Heart right ventricle (tissue), 16 donors: ENCODE measurements at regions of chr9 and their contacts with region 1.

Region 1: DNA sequence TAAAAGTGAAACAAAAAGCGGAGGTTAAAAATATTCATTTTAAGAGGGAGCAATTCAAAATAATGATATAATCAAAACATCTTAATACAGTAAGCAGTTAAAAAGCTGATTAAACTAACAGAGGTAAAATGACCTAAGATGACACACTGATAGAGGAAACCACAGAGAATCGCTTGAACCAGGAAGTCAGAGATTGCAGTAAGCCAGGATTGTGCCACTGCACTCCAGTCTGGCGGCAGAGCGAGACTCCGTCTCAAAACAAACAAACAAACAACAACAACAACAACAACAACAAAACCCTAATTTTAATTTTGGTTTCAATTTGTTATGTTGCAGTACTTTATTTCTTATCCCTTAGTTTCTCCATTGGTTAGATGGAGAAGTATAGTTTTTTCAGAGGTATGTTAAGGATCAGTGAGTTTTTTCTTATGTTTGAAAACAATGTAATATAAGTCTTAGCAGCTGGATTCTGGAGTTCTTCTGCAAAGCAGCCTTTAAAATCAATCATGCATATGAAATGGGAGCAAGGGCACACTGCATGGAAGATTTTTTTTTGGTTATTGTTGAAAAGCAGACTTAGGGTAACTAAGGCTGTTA is 58.5 kb downstream of the MLANA start:
- DNase-seq: no peak
- ATAC-seq: no peak
- H3K4me3 ChIP-seq: peak overlapping the region in 6 of 10 donors; percentile 3 to 32 (median 22)
- H3K27ac ChIP-seq: peak overlapping the region in 2 of 10 donors; percentile 13 to 45
- H3K4me1 ChIP-seq: peaks cover 0 to 37% (median 22%) of the 10 kb centered on the region in 9 donors
- H3K27me3 ChIP-seq: no peaks in the 10 kb centered on the region
- CTCF ChIP-seq: no peak

Region 2: DNA sequence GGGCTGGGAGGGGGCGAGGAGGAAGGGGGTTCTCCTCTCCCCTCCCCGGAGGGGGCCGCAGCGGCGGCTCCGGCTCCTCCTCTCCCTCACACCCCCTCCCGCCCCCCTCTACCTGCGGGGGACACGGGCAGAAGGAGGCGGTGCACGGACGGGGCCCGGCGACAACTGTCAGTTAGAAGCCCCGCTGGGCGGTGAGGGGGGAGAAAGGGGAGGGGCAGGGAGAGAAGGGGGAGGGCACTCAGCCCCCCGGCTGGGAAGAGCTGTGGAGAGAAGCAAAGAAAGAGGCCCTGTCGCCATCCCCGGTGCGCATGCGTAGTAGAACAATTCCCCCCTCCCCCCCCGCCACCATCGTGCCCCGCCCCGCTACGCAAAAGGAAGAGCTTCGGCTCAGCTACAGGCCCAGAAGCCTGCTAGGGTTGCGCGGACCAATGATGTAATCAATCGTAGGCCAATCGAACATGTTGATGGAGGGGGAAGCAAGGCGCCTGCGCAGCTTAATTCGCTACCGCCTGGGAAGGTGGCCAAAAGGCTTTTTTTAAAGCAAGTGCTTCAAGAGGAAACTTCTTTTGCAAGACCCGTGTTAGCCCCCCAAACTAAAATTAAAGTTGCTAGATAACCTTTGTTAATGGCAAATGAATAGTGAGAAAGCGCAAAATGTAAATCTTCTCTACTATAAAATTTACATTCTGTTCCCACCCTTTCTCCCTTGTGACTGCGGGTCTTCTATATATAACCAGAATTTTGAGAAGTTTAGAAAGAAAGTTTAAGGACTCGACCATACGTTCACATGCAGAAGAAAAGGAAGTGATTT is 59.2 kb after region 1 on chr9:
- intact Hi-C with region 1: loop called in 1 of 10 experiments (anchors 10 kb)
- DNase-seq: peak; percentile 89 to 98
- ATAC-seq: peak; percentile 91 to 97 (median 94)
- H3K4me3 ChIP-seq: peak overlapping the region; percentile 68 to 97 (median 84)
- H3K27ac ChIP-seq: peak overlapping the region; percentile 95 to 99 (median 98)
- H3K4me1 ChIP-seq: peaks cover 4 to 71% (median 62%) of the 10 kb centered on the region in 9 donors
- H3K27me3 ChIP-seq: no peaks in the 10 kb centered on the region
- CTCF ChIP-seq: no peak

Region 3: GRCh38 chr9:6015278-6016157 is 66.3 kb after region 1 on chr9 and contains the start of gene RANBP6:
- intact Hi-C with region 1: loop called in 1 of 10 experiments (anchors 5 kb)
- DNase-seq: peak; percentile 91
- ATAC-seq: peak; percentile 99 to 100 (median 100)
- H3K4me3 ChIP-seq: peak within 1 kb of the TSS; percentile 61 to 91 (median 73)
- H3K27ac ChIP-seq: peak within 1 kb of the TSS in 9 of 10 donors; percentile 77 to 94 (median 82)
- H3K4me1 ChIP-seq: peaks cover 0 to 50% (median 42%) of the 10 kb centered on the region in 9 donors
- H3K27me3 ChIP-seq: no peaks in the 10 kb centered on the region
- CTCF ChIP-seq: no peak
- total RNA-seq, gene RANBP6: 21.5 to 36.2 (median 26.8) TPM